ENCODE measurements at regions of chr5 and their contacts with region 1.

Region 1: GRCh38 chr5:66002415-66002814 is 76.0 kb downstream of the ERBIN start:
- DNase-seq: no peak
- ATAC-seq: peak; percentile 96
- H3K4me3 Mint-ChIP-seq: no peak overlapping the region
- H3K27ac Mint-ChIP-seq: peak overlapping the region; percentile 4
- H3K4me1 Mint-ChIP-seq: peaks cover 41% of the 10 kb centered on the region
- H3K27me3 Mint-ChIP-seq: no peaks in the 10 kb centered on the region

Region 2: DNA sequence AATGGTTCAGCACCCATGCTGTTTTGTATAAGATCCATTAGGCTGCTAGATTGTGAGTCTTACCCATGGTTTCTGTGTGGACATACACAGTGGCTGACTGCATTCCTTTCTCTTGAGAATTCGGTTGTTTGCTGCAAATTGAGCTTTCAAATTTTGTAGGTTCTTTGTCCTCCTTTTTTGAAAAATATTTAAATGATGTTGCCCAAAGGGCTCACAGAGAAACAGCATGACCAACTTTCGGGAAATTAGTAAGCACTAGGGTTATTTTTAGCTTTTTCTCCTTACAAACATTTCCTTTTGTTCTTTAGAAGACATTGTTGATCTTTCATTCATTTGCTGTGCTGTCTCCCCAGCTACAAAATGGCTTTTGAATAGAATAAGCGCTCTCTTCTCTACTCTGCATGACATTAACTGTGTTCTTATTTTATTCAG is 201.0 kb before region 1 on chr5:
- CTCF ChIA-PET with region 1: no interaction called
- POLR2A ChIA-PET with region 1: no interaction called
- intact Hi-C with region 1: loop called in 1 of 2 experiments (anchors 5 kb)
- DNase-seq: no peak
- ATAC-seq: no peak
- H3K4me3 Mint-ChIP-seq: no peak overlapping the region
- H3K27ac Mint-ChIP-seq: no peak overlapping the region
- H3K4me1 Mint-ChIP-seq: peaks cover 37% of the 10 kb centered on the region
- H3K27me3 Mint-ChIP-seq: peaks cover 2% of the 10 kb centered on the region

Region 3: DNA sequence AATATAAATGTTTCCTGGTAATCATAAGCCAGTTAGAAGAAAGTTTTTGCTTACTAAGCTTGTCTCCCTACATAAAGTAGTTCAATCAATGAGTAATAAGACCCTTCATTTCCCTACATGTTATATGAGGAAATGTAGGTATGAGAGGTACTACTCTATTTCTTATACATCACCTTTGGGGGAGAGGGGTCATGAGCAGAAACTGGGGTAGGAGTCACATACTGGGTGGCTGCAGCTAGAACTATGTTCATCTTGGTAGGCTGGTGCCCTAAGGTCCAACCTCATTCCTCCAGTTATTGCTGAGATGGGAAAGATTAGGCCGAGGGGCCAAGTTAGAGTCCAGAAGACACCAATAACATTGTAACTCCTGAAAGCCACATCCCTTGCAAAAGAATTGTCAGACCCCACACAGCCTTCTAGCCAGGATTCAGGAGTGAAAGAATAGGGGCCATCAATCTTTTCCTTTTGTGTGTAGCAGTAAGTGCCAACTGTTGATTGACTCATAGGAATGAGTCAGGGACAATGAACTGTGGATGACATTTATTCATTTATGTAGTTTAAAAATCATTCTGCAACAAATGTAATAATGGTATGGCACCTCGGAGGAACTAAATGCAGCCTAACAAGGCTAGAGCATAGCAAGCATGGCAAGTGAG is 120.1 kb after region 1 on chr5:
- CTCF ChIA-PET with region 1: no interaction called
- POLR2A ChIA-PET with region 1: no interaction called
- intact Hi-C with region 1: loop called in 1 of 2 experiments (anchors 1 kb)
- DNase-seq: no peak
- ATAC-seq: peak; percentile 82
- H3K4me3 Mint-ChIP-seq: no peak overlapping the region
- H3K27ac Mint-ChIP-seq: no peak overlapping the region
- H3K4me1 Mint-ChIP-seq: peaks cover 4% of the 10 kb centered on the region
- H3K27me3 Mint-ChIP-seq: no peaks in the 10 kb centered on the region

Measured in activated CD4-positive, alpha-beta T cell treated with anti-CD3 and anti-CD28 coated beads for 36 hours (primary cell).